ENCODE measurements at regions of chr1 and their contacts with region 1.

Region 1: DNA sequence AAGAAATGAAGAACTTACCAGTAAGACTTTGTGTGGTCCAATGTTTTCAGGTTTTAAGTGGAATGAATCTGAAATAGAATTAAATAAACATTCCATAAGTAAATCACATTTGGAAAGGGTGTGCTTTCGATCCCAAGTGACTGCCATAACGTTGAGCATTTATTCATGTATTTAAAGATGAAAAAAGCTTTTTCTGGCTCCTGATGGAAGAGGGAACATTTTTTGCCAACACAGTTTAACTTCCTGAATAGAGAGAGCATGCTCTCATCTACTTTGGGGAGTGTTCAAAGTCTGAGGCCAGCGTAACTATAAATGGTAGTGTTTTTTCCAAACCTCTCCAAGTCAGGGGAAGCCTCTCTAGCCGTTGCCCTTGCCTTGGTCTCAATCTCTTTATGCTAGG is 55.8 kb downstream of the GNG12 start:
- DNase-seq: no peak

Region 2: DNA sequence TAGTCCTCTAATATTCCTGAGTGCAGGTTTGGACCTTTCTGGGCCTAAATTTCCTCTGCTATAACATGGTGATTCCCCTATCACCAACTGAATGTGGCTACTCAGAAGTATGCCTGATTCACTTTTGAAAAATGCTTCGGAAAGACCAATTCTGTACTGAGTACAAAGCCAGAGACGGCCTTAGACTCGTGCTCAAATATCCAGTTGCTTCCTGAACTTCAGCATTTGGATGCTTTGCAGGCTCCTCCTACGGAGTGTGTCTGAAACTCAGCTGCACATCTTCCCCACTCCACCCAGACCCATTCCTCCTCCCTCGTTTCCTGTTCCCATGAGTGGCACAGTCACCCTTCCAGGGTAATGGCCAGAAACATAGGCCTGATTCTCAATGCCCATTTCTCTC is 190.8 kb before region 1 on chr1:
- intact Hi-C with region 1: no loop called
- DNase-seq: no peak

Region 3: GRCh38 chr1:67612788-67613241 is 164.6 kb before region 1 on chr1:
- intact Hi-C with region 1: no loop called
- DNase-seq: no peak

Region 4: GRCh38 chr1:67815303-67816094 is 38.1 kb after region 1 on chr1:
- intact Hi-C with region 1: loop called in 1 of 2 experiments (anchors 5 kb)
- DNase-seq: no peak

Region 5: DNA sequence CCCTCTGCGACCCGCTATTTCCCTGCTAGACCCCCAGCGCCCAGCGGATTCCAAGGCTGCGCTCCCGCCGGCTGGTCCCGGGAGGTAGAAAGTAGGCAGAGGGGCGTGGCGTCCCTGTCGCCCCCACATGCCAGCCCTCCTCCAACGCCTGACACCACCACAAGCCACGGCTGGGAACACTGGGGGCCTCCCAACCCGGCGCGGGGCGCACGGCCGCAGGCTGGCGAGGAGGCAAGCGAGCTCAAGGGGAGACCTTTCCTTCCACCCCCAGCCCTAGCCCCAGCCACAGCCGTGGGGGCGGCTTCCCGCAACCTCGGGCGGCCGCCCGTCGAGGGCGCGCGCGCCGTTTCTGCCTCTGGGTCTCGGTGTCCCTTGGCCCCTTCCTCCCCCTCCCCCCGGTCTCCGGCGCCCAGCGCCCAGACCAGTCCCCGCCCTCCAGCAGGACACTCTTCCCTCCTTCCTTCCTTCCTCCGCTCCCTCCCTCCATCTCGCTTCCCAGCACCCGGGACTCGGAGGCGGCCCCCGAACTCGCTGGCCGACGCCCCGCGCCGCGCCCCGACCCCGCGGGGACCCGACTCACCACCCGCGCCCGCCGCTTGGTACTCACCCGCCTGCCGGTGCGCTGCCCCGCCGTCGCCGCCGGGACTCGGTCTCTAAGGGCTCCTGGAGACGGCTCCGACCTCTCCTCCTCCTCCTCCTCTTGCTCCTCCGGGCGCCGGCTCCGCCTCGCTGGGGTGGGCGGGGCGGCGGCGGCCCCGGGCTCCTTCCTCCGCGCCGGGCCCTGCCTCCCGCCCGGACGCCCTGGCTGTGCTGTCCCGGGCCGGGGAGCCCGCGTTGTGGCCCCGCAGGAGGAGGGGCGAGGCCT is 55.5 kb after region 1 on chr1 and contains the start of gene GNG12:
- intact Hi-C with region 1: loop called in 1 of 2 experiments (anchors 5 kb)
- DNase-seq: peak; percentile 90
- total RNA-seq, gene GNG12: 165 to 166 TPM

Measured in posterior vena cava (tissue), 2 donors.